ENCODE measurements at regions of chr19 and their contacts with region 1.

Region 1: DNA sequence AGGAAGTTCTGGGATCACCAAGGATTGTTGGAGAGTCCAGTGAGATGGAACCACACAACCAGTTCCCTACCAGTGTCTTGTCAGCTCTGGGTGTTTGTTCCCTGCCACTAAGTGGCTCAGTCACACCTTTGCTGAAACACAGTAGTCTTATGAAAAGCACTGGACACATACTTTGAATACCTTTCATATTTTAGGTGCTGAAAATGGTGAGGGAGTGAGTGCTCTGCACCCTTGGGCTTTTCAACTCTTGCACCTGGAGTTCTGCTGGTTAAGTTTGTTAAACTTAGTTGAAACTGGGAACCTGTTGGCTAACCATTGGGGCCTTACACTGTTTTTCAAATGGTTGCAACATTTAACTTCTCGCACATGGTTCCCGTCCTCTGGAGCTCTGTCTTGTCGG is 22.4 kb downstream of the ZNF473 start:
- DNase-seq: no peak
- CTCF ChIP-seq: no peak

Region 2: DNA sequence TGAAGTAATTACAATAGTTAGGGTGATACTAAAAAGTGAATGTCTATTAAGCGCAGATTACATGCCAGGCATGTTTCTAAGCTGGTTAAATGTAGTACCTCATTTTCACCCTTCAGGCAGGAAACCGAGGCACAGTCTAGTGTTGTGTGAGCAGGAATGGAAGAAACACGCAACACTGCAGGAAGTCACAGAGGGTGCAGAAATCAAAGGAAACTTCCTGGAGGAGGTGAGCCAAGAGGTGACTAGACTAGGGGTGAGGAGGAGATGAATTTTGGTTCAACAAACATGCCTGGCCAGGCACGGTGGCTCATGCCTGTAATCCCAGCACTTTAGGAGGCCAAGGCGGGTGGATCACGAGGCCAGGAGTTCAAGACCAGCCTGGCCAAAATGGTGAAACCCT is 19.4 kb after region 1 on chr19:
- CTCF ChIA-PET with region 1: no interaction called
- POLR2A ChIA-PET with region 1: interaction called, 10 read pairs
- DNase-seq: no peak
- CTCF ChIP-seq: no peak

Measured in GM10248 (cell line).